Left colon (tissue), 2 donors: ENCODE measurements at regions of chr1 and their contacts with region 1.

Region 1: GRCh38 chr1:245045087-245045881 is 109.5 kb upstream of the KIF26B start:
- DNase-seq: peak; percentile 61 to 83
- ATAC-seq: peak; percentile 97

Region 2: GRCh38 chr1:244599937-244600350 is 445.3 kb before region 1 on chr1:
- intact Hi-C with region 1: loop called (anchors 10 kb)
- DNase-seq: no peak
- ATAC-seq: peak; percentile 79

Region 3: DNA sequence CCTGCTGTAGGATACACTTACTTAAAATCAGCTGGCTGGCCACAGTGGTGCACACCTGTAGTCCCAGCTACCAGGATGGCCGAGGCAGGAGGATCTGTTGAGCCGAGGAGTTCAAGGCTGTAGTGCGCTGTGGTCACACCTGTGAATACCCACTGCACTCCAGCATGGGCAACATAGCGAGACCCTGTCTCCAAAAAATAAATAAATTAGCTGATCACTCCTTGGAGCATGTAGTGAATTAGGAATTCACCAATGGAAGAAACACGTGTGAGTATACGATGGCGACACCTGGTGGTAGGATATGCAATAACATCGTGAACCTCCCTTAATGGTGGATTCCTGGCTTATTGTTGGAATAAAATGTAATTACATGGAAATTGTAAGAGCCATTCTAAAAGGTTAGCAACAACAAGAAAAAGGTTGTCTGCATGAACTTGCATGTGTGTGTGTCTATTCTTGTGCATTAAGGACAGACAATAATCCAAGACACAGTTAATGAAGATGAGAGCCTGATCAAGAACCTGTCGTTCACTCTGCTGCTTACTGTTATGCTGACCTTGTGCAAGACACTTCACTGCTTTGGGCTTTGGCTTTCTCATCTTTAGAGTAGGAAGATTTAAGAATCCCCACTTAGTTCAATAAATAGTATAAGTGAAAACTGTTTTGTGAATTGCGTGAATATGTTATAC is 248.4 kb before region 1 on chr1:
- intact Hi-C with region 1: loop called in 1 of 2 experiments (anchors 10 kb)
- DNase-seq: peak in 1 of 2 donors; percentile 69
- ATAC-seq: peak; percentile 66

Region 4: GRCh38 chr1:244864253-244865027 is 180.8 kb before region 1 on chr1 and contains the start of gene HNRNPU:
- intact Hi-C with region 1: loop called in 1 of 2 experiments (anchors 5 kb)
- DNase-seq: peak; percentile 95 to 98
- ATAC-seq: peak; percentile 85
- total RNA-seq, gene HNRNPU: 188 to 225 TPM

Region 5: DNA sequence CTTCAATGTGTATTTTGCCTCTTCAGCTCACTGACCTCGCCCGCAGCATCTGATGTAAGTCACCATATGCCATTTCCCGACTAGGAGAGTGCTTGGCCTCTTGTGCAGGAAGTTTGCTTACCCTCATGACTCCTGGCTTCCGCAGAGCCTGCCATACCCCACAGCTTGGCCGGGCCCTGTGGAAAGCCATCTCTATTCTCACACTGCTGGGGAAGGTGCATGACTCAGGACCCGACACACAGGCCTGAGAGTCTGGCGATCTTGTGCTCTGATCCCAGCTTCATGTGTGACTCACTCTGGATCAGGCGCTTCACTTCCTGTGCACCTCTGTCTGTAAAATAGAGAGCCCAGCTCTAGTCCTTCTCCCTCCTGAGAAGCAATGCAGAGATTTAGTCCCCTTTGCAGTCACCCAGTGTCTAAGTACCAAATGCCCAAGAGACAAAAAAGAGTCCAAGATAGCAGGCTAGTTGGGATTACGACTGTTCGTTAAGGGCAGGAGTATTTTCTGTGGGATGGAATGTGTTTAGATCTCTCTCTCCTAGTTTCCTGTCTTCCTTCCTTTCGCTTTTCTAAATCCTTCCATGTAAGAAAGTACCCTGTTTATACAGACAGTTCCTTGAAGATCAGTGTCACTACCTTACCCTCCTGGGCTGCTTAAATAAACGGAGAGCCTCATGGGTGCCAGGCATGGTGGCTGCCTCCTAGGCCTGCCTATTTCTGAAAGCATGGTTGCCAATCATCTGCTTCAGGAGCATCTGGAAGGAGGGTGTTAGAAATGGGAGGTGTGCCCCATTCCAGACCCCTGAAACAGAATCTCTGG is 46.7 kb after region 1 on chr1:
- intact Hi-C with region 1: no loop called
- DNase-seq: no peak
- ATAC-seq: peak; percentile 29